ENCODE measurements at regions of chr2 and their contacts with region 1.

Region 1: GRCh38 chr2:197952540-197953202 is 148.3 kb downstream of the PLCL1 start:
- DNase-seq: peak; percentile 49
- ATAC-seq: peak; percentile 89
- H3K4me3 Mint-ChIP-seq: no peak overlapping the region
- H3K27ac Mint-ChIP-seq: peak overlapping the region; percentile 65
- H3K4me1 Mint-ChIP-seq: peaks cover 76% of the 10 kb centered on the region
- H3K27me3 Mint-ChIP-seq: no peaks in the 10 kb centered on the region

Region 2: DNA sequence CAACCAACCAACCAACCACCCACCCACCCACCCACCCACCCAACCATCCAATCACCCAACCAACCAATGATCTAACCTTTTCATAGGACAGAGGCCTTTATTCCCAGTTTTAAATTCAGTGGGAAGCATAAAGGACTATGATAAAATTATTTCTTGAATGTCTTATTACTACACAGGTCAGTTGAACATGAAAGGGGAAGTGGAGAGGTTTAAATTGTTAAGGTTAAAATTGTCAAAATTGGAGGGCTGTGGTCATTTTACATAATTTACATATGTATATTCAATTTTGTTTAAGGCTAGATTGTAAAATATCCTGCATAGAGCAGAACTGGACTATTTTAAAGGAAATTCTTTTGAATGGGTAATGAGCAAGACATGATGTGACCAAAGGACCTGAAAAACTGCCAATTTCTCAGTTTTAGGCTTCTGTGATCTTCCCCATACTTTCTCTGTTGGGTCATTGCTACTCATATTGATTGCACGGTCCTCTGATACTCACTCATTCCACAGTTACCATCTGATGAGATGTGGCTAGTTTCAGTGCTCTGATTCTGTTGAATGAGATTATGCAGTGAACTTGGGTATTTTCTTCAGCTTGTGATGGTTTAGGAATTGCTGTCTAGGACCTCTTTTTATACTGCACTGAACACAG is 20.9 kb before region 1 on chr2:
- CTCF ChIA-PET with region 1: no interaction called
- POLR2A ChIA-PET with region 1: no interaction called
- intact Hi-C with region 1: loop called in 1 of 2 experiments (anchors 2 kb)
- DNase-seq: no peak
- ATAC-seq: peak; percentile 65
- H3K4me3 Mint-ChIP-seq: no peak overlapping the region
- H3K27ac Mint-ChIP-seq: no peak overlapping the region
- H3K4me1 Mint-ChIP-seq: peaks cover 47% of the 10 kb centered on the region
- H3K27me3 Mint-ChIP-seq: no peaks in the 10 kb centered on the region

Region 3: DNA sequence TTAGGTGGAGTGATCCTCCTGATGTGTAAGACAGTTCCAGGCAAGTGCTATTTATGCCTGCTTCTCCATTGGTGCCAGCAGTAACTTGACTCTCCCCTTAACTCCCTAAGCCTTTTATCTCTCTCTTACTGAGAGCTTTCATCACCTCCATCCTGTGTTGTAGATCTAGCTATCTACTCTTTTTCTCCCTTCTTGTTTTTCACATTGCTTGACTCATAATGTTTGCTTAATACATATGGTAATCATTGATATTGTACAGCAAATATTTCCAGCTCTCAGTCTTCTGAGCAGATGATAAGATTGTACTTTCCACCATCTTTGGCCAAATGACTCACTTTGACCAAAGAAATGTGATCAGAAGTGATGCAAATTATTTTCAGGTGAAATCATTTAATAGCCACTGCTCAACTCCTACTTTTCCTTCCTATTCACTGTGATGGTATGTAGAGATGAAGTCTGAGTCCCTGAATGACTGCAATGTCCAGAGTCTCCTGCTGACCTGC is 16.8 kb after region 1 on chr2:
- CTCF ChIA-PET with region 1: no interaction called
- POLR2A ChIA-PET with region 1: no interaction called
- intact Hi-C with region 1: loop called in 1 of 2 experiments (anchors 2 kb)
- DNase-seq: no peak
- ATAC-seq: peak; percentile 70
- H3K4me3 Mint-ChIP-seq: no peak overlapping the region
- H3K27ac Mint-ChIP-seq: peak overlapping the region; percentile 71
- H3K4me1 Mint-ChIP-seq: peaks cover 54% of the 10 kb centered on the region
- H3K27me3 Mint-ChIP-seq: no peaks in the 10 kb centered on the region

Region 4: GRCh38 chr2:198004921-198005829 is 52.5 kb after region 1 on chr2:
- CTCF ChIA-PET with region 1: no interaction called
- POLR2A ChIA-PET with region 1: interaction called, 3 read pairs
- intact Hi-C with region 1: loop called in 1 of 2 experiments (anchors 2 kb)
- DNase-seq: peak; percentile 71
- ATAC-seq: peak; percentile 67
- H3K4me3 Mint-ChIP-seq: peak overlapping the region; percentile 32
- H3K27ac Mint-ChIP-seq: peak overlapping the region; percentile 88
- H3K4me1 Mint-ChIP-seq: peaks cover 83% of the 10 kb centered on the region
- H3K27me3 Mint-ChIP-seq: no peaks in the 10 kb centered on the region

Region 5: DNA sequence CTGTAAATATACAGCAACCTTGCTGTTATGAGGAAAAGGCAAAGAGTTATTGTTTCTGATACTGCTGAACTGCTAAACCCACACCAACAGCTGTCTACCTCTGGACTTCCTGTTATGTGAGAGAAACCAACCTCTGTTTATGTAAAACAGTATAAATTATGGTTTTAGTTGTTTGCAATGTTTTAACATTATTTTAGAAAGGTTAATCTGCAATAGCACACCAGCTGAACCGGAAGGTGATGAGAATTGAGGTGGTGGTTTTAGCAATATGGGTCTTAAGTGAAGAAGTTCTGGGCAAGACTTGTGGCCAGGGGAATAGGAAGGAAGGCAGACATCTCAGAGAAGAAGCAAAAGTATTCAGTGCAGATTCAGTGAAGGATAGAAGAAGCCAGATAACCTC is 89.5 kb after region 1 on chr2:
- CTCF ChIA-PET with region 1: interaction called, 3 read pairs
- POLR2A ChIA-PET with region 1: no interaction called
- intact Hi-C with region 1: loop called in 1 of 2 experiments (anchors 5 kb)
- DNase-seq: no peak
- ATAC-seq: no peak
- H3K4me3 Mint-ChIP-seq: no peak overlapping the region
- H3K27ac Mint-ChIP-seq: no peak overlapping the region
- H3K4me1 Mint-ChIP-seq: peaks cover 27% of the 10 kb centered on the region
- H3K27me3 Mint-ChIP-seq: no peaks in the 10 kb centered on the region